Calu3 (cell line): ENCODE measurements at regions of chr12 and their contacts with region 1.

Region 1: DNA sequence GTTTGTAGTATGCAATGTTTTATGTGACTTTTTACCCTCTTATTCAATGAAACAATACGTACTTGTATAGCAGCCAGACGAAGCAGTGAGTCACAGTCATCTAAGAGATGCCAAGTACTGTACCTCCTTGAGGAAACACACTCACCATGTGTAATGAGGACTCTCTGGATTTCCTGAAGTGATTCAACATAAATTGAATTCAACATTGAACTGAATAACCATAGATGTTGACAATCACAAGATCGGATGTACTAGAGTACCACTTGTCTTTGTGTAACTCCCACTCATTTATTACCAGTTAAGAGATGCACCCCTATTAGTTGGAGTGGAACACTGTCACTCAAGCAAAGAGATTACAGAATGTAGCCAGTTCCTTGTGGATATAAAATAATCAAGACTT is 175.2 kb upstream of the HMGA2 start:
- DNase-seq: peak; percentile 68
- H3K4me3 Mint-ChIP-seq: peak overlapping the region; percentile 38
- H3K27ac Mint-ChIP-seq: peak overlapping the region; percentile 100
- H3K4me1 Mint-ChIP-seq: peaks cover 57% of the 10 kb centered on the region
- H3K27me3 Mint-ChIP-seq: no peaks in the 10 kb centered on the region
- CTCF ChIP-seq: no peak

Region 2: GRCh38 chr12:65631621-65632111 is 17.5 kb before region 1 on chr12:
- CTCF ChIA-PET with region 1: interaction called, 4 read pairs
- intact Hi-C with region 1: loop called (anchors 2 kb)
- DNase-seq: peak; percentile 72
- H3K4me3 Mint-ChIP-seq: peak overlapping the region; percentile 31
- H3K27ac Mint-ChIP-seq: peak overlapping the region; percentile 90
- H3K4me1 Mint-ChIP-seq: peaks cover 67% of the 10 kb centered on the region
- H3K27me3 Mint-ChIP-seq: no peaks in the 10 kb centered on the region
- CTCF ChIP-seq: no peak